ENCODE measurements at regions of chr4 and their contacts with region 1.

Region 1: DNA sequence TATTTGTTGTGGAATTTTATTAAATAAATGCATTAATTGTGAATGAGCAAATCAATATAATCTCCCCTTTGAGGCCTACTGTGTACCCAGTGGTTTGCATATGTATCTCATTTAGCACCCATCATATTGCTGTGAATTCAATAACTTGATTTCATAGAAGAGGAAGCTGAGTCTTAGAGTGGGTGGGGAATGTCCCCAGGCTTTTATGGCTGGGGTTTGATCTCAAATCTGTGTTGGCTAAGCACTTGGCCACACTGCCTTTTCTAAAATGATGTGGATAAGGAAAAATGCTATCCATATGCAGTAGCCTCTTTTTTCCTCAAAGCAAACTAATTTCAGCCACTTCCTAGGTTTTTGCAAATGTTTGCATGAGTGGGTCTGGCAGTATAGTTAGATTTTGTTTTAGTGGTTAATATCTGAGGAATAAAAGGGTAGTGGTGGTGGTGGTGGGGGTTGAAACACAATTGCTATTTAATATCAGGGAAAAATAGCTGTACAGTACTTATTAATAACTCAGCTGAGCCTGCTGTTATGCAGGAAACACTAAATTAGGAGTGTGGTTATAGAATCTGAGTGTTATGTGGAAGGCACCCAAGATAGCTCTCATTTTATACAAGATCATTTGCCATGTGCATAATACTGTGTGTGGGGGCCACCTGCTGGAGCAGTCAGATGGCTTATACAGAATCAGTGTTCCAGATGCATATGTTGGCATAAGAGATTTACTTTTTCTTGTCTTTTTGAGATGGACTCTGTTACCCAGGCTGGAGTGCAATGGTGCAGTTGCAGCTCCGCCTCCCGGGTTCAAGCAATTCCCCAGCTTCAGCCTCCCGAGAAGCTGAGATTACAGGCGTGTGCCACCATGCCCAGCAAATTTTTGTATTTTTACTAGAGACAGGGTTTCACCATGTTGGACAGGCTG is 108.0 kb downstream of the TMEM131L start:
- DNase-seq: peak; percentile 63
- ATAC-seq: peak; percentile 87 to 92

Region 2: DNA sequence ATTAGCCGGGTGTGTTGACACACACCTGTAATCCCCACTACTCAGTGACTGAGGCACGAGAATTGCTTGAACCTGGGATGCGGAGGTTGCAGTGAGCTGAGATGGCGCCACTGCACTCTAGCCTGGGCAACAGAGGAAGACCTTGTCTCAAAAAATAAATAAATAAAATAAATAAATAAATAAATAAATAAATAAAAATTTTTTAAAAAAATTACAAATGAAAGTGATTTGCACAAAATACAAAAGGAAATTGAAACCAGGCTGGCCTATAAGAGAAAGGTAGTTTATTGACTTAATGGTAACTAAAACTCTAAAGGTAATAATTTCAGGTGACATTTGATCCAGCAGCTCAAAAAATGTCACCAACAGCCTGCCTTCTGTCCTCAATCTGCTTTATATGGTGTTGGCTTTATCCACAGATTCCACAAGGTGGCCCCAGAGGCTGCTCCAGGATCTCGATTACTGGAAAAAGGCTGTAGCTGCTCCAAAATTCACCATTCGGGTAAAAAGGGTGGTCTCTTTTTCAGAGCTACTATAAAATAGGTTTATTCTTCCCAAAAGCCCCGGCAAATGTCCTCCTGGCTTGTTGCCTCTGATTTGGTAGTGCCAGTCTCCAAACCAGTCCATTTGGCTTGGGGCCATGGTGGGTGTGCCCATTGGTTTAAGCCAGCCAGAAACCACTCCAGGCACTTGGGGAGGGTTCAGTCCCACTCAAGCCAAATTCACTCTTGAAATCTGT is 431.3 kb before region 1 on chr4:
- intact Hi-C with region 1: loop called in 1 of 2 experiments (anchors 5 kb)
- DNase-seq: peak; percentile 81
- ATAC-seq: peak; percentile 81 to 84

Region 3: GRCh38 chr4:153344131-153345010 is 229.8 kb before region 1 on chr4 and contains the start of gene MND1:
- intact Hi-C with region 1: loop called (anchors 1 to 2 kb)
- DNase-seq: peak; percentile 87
- ATAC-seq: peak; percentile 97
- total RNA-seq, gene MND1: 0.62 TPM in 1 of 2 donors, not detected in the other

Region 4: GRCh38 chr4:153432968-153433753 is 141.0 kb before region 1 on chr4:
- intact Hi-C with region 1: loop called (anchors 1 to 10 kb)
- DNase-seq: peak; percentile 66
- ATAC-seq: peak; percentile 88 to 91

Region 5: DNA sequence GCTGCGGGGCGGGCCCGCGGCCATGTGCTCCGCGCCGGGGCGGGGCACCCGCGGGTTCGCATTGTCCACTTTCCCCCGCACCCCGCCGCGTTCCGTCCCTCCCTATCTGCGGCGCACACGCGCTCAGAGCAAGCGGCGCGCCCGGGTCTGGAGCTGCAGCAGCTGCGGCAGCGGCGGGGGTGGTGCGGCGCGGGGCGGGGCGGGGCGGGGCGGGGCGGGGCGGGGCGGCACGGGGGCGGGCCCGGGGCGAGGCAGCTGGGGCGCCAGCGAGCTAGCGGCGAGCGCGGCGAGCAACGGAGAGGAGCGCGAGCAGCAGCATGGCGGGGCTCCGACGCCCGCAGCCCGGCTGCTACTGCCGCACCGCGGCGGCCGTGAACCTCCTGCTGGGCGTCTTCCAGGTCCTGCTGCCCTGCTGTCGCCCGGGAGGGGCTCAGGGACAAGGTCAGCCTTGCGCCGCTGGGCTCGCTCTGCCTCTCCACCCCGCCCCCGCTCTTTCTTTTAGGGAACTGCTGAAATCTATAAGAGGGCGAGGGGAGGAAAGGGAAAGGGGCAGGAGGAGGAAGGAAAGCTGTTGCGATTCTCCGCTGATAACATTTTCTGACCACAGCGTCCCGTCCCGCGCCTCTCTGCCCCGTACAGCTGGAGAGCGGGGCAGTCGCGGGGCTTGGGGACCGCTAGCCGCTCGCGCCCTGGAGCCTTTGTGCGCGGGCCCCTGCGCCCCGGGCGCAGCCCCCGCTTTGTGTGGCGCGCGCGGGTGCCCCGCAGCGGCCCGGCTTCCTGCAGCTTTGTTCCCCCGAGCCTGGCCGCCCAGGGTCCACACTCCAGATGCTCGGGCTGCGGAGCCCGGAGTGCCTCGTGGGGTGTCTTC is 107.8 kb before region 1 on chr4 and contains the start of gene TMEM131L:
- intact Hi-C with region 1: loop called (anchors 5 kb)
- DNase-seq: peak; percentile 77
- ATAC-seq: peak; percentile 92 to 93
- total RNA-seq, gene TMEM131L: 8.1 to 13.1 TPM

Region 6: DNA sequence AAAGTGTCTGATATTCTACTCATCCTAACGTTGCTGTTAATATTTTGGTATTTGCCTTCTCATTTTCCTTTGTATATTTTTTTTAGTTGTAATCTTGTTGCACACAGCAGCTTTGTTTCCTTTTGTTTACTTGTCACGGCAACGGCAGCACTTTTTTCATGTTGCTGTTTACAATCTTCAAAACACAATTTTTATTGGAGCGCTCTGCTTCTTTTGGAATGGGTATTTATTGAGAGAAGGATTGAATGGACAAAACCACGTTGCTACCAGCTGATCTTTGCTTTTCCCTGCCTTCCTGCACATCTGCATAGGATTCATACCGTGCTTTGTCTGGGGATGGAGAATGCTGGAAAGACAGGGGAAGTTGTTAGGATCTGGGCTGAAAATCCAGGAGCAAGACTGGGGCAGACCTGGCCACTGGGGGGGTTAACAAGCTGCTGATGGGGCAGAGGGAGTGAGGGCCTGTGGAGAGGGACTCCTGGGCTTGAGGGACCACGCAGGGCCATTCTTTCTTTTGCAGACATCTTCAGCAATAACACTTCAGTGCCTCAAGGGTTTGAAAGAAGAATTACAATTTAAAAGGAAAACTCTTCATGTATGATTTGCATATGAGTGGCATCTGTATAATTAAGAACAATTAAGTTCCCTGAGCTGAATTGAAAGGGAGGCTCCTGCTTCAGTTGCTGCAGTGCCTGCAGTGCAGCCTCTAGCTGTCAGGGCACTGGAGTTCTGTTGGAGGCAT is 38.2 kb before region 1 on chr4:
- intact Hi-C with region 1: no loop called
- DNase-seq: no peak
- ATAC-seq: no peak

Region 7: GRCh38 chr4:154124539-154125255 is 550.6 kb after region 1 on chr4:
- intact Hi-C with region 1: no loop called
- DNase-seq: no peak
- ATAC-seq: peak in 1 of 2 donors; percentile 53

Measured in left cardiac atrium (tissue), 4 donors.